ENCODE measurements at regions of chr14 and their contacts with region 1.

Region 1: GRCh38 chr14:20632682-20633428 is 8.6 kb downstream of the OR6S1 start:
- DNase-seq: peak; percentile 81
- ATAC-seq: peak; percentile 49
- H3K4me3 ChIP-seq: peak overlapping the region in 4 of 5 experiments; percentile 33 to 65 (median 50)
- H3K4me3 Mint-ChIP-seq: peak overlapping the region; percentile 86
- H3K27ac ChIP-seq: no peak overlapping the region
- H3K27ac Mint-ChIP-seq: peak overlapping the region; percentile 91
- H3K4me1 ChIP-seq: peaks cover 35 to 38% of the 10 kb centered on the region in 2 donors
- H3K4me1 Mint-ChIP-seq: peaks cover 44% of the 10 kb centered on the region
- H3K27me3 ChIP-seq: peaks cover 0 to 38% (median 14%) of the 10 kb centered on the region in 4 experiments
- H3K27me3 Mint-ChIP-seq: peaks cover 35% of the 10 kb centered on the region
- CTCF ChIP-seq: no peak

Region 2: GRCh38 chr14:20652996-20653975 is 20.4 kb after region 1 on chr14:
- CTCF ChIA-PET with region 1: interaction called, 3 read pairs
- POLR2A ChIA-PET with region 1: interaction called, 8 read pairs
- intact Hi-C with region 1: loop called (anchors 2 kb)
- DNase-seq: peak; percentile 57
- ATAC-seq: peak; percentile 21
- H3K4me3 ChIP-seq: peak overlapping the region in 2 of 5 experiments; percentile 32 to 45
- H3K4me3 Mint-ChIP-seq: peak overlapping the region; percentile 68
- H3K27ac ChIP-seq: no peak overlapping the region
- H3K27ac Mint-ChIP-seq: peak overlapping the region; percentile 5
- H3K4me1 ChIP-seq: peaks cover 26 to 28% of the 10 kb centered on the region in 2 donors
- H3K4me1 Mint-ChIP-seq: peaks cover 27% of the 10 kb centered on the region
- H3K27me3 ChIP-seq: peaks cover 0 to 56% (median 44%) of the 10 kb centered on the region in 4 experiments
- H3K27me3 Mint-ChIP-seq: peaks cover 69% of the 10 kb centered on the region
- CTCF ChIP-seq: no peak

Region 3: DNA sequence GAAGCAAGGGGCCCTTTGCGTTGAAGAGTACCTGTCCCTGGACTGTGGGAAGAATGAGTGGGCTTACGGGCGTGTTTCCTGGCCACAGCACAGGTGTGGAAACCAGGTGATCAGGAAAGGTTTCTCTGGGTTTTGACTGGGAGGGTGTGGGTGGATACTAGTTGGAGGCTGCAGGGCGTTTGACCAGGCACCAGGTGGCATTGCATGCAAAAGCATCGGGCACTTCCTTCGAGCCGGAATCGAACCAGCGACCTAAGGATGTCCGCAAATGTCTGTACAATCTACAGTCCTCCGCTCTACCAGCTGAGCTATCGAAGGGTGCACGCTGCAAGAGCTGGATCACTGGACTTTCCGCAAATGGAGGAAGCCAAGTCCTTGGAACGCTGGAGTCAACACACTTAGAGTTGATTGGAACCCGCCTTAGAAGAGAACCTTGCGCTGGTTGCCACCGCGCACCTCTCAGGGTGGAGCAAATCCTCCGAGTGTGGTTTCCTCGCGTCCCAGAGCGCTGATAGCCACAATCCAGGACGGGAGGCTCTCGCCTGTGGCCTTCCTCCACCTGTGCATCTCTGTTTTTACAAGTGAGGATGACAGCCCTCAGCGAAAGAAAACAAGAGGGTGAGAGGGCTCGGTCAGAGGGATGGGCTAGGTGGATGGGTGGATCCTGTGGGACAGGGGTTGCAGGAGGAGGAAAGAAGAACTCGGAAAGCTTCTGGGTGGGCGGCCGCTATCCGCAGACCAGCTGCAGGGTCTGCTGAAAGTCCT is 30.3 kb after region 1 on chr14:
- CTCF ChIA-PET with region 1: no interaction called
- POLR2A ChIA-PET with region 1: no interaction called
- intact Hi-C with region 1: loop called (anchors 5 kb)
- DNase-seq: peak; percentile 90
- ATAC-seq: peak; percentile 85
- H3K4me3 ChIP-seq: peak overlapping the region; percentile 30 to 93 (median 64)
- H3K4me3 Mint-ChIP-seq: peak overlapping the region; percentile 93
- H3K27ac ChIP-seq: peak overlapping the region in 1 of 2 donors; percentile 34
- H3K27ac Mint-ChIP-seq: peak overlapping the region; percentile 62
- H3K4me1 ChIP-seq: peaks cover 39 to 55% of the 10 kb centered on the region in 2 donors
- H3K4me1 Mint-ChIP-seq: peaks cover 53% of the 10 kb centered on the region
- H3K27me3 ChIP-seq: peaks cover 0 to 7% (median 0%) of the 10 kb centered on the region in 4 experiments
- H3K27me3 Mint-ChIP-seq: no peaks in the 10 kb centered on the region
- CTCF ChIP-seq: peak; percentile 71